Activated B cell treated with CpG ODN at 0.5 μM for 24 hours (primary cell): ENCODE measurements at regions of chr12 and their contacts with region 1.

Region 1: DNA sequence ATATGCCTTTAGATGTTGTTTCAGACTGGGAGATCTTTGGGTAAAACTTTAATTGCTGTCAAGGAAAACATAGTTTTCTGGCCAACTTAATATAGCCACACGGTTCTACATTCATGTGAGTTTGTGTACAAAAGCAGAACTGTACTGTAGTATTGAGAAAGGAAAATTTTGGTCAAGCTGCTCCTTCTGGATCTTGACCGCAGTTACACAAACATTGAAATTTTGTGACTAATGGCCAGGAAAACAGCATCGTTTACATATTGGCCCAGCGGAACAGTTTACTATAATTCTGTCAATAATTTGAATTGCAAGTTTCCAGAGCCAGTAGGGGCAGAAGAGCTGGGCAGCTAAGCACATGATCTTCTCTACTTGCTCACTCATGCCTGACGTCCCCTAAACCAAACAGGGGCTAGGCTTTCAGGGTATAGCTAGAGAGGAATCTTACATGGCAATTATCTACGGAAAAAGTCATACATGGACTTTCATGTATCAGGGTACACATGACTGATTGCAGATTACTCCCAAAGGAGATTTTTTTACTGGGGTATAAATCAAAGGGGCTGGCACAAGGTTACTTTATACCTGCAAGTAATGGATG is 11.4 kb upstream of the ART4 start:
- DNase-seq: no peak
- ATAC-seq: peak; percentile 28
- H3K4me3 Mint-ChIP-seq: no peak overlapping the region
- H3K27ac Mint-ChIP-seq: no peak overlapping the region
- H3K4me1 Mint-ChIP-seq: peaks cover 37% of the 10 kb centered on the region
- H3K27me3 Mint-ChIP-seq: no peaks in the 10 kb centered on the region
- CTCF ChIP-seq: no peak

Region 2: GRCh38 chr12:14272956-14273907 is 581.5 kb before region 1 on chr12:
- CTCF ChIA-PET with region 1: no interaction called
- POLR2A ChIA-PET with region 1: no interaction called
- intact Hi-C with region 1: no loop called
- DNase-seq: no peak
- ATAC-seq: peak; percentile 68
- H3K4me3 Mint-ChIP-seq: peak overlapping the region; percentile 54
- H3K27ac Mint-ChIP-seq: peak overlapping the region; percentile 87
- H3K4me1 Mint-ChIP-seq: peaks cover 53% of the 10 kb centered on the region
- H3K27me3 Mint-ChIP-seq: no peaks in the 10 kb centered on the region
- CTCF ChIP-seq: no peak

Region 3: GRCh38 chr12:14716848-14717444 is 137.7 kb before region 1 on chr12:
- CTCF ChIA-PET with region 1: no interaction called
- POLR2A ChIA-PET with region 1: no interaction called
- intact Hi-C with region 1: no loop called
- DNase-seq: no peak
- ATAC-seq: peak; percentile 75
- H3K4me3 Mint-ChIP-seq: no peak overlapping the region
- H3K27ac Mint-ChIP-seq: no peak overlapping the region
- H3K4me1 Mint-ChIP-seq: peaks cover 2% of the 10 kb centered on the region
- H3K27me3 Mint-ChIP-seq: peaks cover 8% of the 10 kb centered on the region
- CTCF ChIP-seq: peak; percentile 15

Region 4: DNA sequence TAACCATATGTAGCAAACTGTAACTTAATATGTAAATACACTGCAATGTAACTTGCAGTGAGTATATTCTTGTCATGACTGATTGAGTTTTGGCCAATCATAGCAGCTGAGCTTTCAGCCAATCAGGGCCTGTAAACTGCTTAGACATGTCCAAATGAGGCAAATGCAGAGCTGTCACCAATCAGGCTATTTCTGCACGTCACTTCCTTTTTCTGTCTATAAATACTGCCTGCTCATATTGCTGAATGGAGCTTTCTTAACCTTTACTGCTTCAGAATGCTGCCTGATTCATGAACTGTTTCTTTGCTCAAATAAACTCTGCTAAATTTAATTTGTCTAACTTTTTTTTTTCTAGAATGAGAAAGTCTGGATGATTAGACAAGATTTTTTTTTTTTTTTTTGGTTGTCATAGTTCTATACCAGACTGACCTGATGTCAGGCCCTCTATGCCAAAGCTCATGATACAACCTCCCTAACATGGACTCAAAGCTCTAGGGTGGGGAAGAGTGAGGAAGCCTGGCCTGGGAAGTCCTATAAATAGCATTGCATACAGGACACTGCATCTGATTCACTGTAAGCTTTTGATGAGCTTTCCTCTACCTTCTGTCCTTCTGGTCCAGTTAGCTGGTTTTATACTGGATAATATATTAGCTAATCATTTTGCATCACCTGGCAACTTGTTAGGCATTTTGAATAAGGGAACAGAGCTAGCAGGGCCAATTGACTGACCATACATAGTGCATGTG is 18.9 kb after region 1 on chr12:
- CTCF ChIA-PET with region 1: no interaction called
- POLR2A ChIA-PET with region 1: no interaction called
- intact Hi-C with region 1: loop called (anchors 2 kb)
- DNase-seq: no peak
- ATAC-seq: no peak
- H3K4me3 Mint-ChIP-seq: no peak overlapping the region
- H3K27ac Mint-ChIP-seq: no peak overlapping the region
- H3K4me1 Mint-ChIP-seq: no peaks in the 10 kb centered on the region
- H3K27me3 Mint-ChIP-seq: no peaks in the 10 kb centered on the region
- CTCF ChIP-seq: no peak

Region 5: DNA sequence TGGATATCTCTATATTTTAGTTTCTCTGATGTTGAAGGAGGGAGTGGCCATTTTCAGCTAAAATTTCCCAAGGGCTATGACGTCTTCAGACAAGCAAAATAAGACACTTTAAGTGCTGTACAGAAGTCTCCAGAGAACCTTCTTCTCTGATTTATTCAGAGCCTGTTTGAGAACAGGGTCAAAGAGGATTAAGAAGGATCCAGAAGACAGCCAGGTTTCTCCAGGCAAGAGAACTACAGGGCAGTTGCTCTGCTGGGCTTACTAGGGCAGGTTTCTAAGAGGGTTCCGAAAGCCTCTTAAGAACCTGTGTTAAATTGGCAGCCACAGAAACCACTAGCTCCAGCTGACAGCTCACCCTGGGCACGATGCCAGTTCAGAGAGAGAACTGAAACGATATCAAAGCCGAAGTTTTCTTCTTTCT is 29.8 kb after region 1 on chr12:
- CTCF ChIA-PET with region 1: interaction called, 3 read pairs
- POLR2A ChIA-PET with region 1: no interaction called
- intact Hi-C with region 1: loop called (anchors 2 kb)
- DNase-seq: peak; percentile 57
- ATAC-seq: peak; percentile 96
- H3K4me3 Mint-ChIP-seq: peak overlapping the region; percentile 66
- H3K27ac Mint-ChIP-seq: peak overlapping the region; percentile 76
- H3K4me1 Mint-ChIP-seq: peaks cover 55% of the 10 kb centered on the region
- H3K27me3 Mint-ChIP-seq: peaks cover 25% of the 10 kb centered on the region
- CTCF ChIP-seq: no peak